GM10248 (cell line): ENCODE measurements at regions of chr1 and their contacts with region 1.

Region 1: GRCh38 chr1:156500797-156501499 is 373 bp upstream of the MEF2D start:
- DNase-seq: peak; percentile 94
- CTCF ChIP-seq: peak; percentile 77

Region 2: DNA sequence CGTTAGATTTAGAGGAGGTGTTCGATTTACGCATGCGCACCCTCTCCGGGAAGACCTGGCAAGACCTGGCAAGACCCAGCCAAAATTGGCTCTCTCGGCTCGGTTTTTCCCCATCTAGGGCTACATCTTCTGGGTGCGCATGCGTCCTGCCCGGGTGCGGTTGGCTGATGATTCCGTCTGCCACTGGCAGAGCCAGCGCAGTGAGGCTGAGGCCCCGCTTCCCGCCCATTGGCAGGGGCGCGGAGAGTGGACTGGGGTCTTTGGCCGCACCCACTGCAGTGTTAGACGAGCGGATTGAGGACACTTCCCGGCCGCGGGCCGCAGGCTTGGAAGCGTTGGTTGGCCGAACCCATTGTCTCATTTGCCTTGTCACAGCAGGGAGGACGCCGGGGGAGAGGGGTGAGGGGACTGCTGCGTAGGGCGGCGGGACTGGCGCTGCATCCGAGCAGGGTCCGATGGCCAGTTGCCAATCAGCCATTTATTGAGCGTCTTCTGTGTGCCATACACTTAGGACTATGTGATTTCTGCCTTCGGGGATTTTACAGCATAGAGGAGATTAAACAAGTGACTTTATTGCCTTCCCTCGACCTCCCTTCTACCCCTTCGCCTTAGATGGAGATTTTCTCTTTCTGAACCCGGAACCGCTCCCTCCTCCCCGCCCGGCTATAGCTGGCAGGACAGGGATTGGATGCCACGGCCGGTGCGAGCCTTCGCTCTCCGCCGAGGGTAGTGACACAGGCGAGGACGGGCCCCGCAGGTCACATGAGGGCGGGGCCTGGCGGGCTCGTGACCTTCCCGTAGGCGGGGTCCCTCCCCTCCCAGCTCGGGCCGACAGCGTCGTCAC is 44.1 kb before region 1 on chr1:
- CTCF ChIA-PET with region 1: interaction called, 14 read pairs
- POLR2A ChIA-PET with region 1: interaction called, 10 read pairs
- DNase-seq: peak; percentile 98
- CTCF ChIP-seq: no peak

Region 3: DNA sequence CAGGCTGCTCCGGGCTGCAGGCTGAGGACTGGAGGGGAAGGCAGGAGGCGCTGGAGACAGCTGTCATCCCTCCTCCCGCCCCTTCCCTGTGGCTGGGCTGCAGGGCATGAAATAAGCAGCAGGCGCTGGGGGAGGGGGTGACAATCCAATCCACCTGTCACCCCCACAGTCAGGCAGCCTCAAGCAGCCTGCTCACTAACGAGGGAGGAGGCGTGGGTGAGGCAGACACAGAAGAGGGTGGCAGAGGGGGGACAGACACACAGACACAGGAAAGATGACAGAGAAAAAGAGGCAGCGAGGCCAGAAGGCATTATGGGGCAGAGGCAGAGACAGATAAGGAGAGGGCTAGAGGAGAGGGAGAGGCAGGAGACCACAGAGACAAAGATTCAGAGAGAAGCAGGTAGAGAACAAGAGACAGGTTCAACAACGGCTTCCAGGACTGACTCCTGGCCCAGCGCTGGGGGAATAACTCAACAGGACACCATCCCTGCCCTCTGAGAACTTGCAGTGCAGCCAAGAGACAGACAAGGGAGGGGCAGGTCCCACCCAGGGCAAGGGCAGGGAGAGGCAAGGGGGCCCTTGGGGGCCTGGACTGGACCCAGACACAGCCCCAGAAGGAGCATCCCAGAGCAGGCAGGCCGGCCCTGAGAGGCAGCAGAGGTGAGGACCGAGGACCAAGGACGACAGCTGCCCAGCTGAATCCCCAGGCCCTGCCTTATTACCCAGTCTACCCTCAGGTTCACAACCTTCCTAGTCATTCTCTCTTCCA is 11.6 kb before region 1 on chr1:
- CTCF ChIA-PET with region 1: interaction called, 373 read pairs
- POLR2A ChIA-PET with region 1: interaction called, 59 read pairs
- DNase-seq: no peak
- CTCF ChIP-seq: no peak

Region 4: DNA sequence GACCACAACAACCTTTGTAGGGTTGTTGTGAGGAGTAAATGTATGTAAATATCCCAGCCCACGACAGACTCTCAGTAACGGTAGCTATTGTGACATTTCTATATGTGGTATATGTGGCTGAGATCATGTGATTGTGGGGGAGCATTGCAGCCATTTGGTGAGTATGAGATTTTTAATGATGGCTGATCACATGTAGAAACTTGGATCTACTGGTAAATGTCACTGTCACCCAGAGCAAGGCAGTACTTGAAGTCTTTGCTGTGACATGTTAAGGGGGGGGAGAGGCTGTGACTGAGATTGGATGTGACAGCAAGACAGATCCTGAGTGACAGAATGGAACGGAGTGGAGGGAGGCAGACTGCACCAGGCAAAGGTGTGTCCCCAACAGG is 23.5 kb after region 1 on chr1:
- CTCF ChIA-PET with region 1: interaction called, 26 read pairs
- POLR2A ChIA-PET with region 1: interaction called, 4 read pairs
- DNase-seq: peak; percentile 44
- CTCF ChIP-seq: no peak